ENCODE measurements at regions of chr2 and their contacts with region 1.

Region 1: GRCh38 chr2:155310589-155310988 is 612.1 kb downstream of the KCNJ3 start:
- DNase-seq: peak; percentile 27
- H3K4me3 Mint-ChIP-seq: no peak overlapping the region
- H3K27ac Mint-ChIP-seq: no peak overlapping the region
- H3K4me1 Mint-ChIP-seq: no peaks in the 10 kb centered on the region
- H3K27me3 Mint-ChIP-seq: no peaks in the 10 kb centered on the region
- CTCF ChIP-seq: peak; percentile 53

Region 2: GRCh38 chr2:154402218-154402617 is 908.4 kb before region 1 on chr2:
- CTCF ChIA-PET with region 1: interaction called, 3 read pairs
- POLR2A ChIA-PET with region 1: no interaction called
- intact Hi-C with region 1: loop called (anchors 1 kb)
- DNase-seq: peak; percentile 49
- H3K4me3 Mint-ChIP-seq: no peak overlapping the region
- H3K27ac Mint-ChIP-seq: no peak overlapping the region
- H3K4me1 Mint-ChIP-seq: no peaks in the 10 kb centered on the region
- H3K27me3 Mint-ChIP-seq: peaks cover 54% of the 10 kb centered on the region
- CTCF ChIP-seq: peak; percentile 33

Region 3: GRCh38 chr2:154452906-154453493 is 857.6 kb before region 1 on chr2:
- CTCF ChIA-PET with region 1: interaction called, 4 read pairs
- POLR2A ChIA-PET with region 1: interaction called, 4 read pairs
- intact Hi-C with region 1: loop called (anchors 2 kb)
- DNase-seq: peak; percentile 33
- H3K4me3 Mint-ChIP-seq: no peak overlapping the region
- H3K27ac Mint-ChIP-seq: no peak overlapping the region
- H3K4me1 Mint-ChIP-seq: no peaks in the 10 kb centered on the region
- H3K27me3 Mint-ChIP-seq: peaks cover 74% of the 10 kb centered on the region
- CTCF ChIP-seq: peak; percentile 37

Measured in MCF 10A (cell line).